Common myeloid progenitor, CD34-positive (primary cell): ENCODE measurements at regions of chr11 and their contacts with region 1.

Region 1: GRCh38 chr11:8092587-8093424 is 11.8 kb downstream of the TUB start:
- DNase-seq: peak; percentile 53 to 67 (median 66)
- H3K4me3 ChIP-seq: no peak overlapping the region
- H3K27ac ChIP-seq: no peak overlapping the region
- H3K4me1 ChIP-seq: peaks cover 0 to 9% (median 3%) of the 10 kb centered on the region in 4 experiments
- H3K27me3 ChIP-seq: peaks cover 0 to 2% (median 0%) of the 10 kb centered on the region in 5 experiments

Region 2: DNA sequence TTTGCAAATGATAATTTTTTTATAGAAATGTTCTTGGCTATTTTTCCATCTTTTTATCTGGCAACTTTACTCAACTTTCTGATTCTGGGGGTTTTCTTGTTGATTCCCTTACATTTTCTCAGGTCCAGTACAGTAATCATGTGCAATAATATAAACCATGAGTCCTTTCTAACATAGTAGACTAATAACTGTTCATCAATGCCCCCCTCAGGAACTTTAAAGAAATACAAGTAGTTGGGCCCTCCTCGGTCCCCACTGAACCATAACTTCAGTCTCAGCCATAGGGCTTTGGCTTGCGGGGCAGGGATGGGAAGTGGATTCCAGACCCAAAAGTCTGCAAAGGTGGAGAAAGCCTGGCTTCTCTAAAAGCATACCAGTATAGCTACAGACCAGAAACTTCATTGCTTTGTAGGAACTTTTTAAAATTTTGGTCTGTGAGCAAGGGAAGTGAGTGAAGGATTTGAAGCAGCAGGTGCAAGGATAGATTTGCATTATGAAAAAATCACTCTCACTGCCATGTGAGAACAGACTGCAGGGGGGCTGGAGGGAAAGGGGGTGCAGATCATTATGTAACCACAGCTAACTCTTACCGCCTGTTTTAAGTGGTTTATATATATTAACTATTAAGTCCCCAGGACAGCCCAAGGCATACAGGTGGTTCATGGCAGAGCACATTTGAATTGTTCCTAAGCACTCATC is 22.2 kb before region 1 on chr11:
- CTCF ChIA-PET with region 1: interaction called, 13 read pairs
- POLR2A ChIA-PET with region 1: no interaction called
- DNase-seq: peak; percentile 27 to 47 (median 38)
- H3K4me3 ChIP-seq: no peak overlapping the region
- H3K27ac ChIP-seq: no peak overlapping the region
- H3K4me1 ChIP-seq: no peaks in the 10 kb centered on the region
- H3K27me3 ChIP-seq: peaks cover 0 to 17% (median 5%) of the 10 kb centered on the region in 5 experiments